Breast epithelium (tissue), 4 donors: ENCODE measurements at regions of chr20 and their contacts with region 1.

Region 1: GRCh38 chr20:10823585-10823984 is 149.8 kb upstream of the JAG1 start:
- DNase-seq: no peak
- H3K4me3 ChIP-seq: no peak overlapping the region
- H3K27ac ChIP-seq: no peak overlapping the region
- H3K4me1 ChIP-seq: no peaks in the 10 kb centered on the region
- H3K27me3 ChIP-seq: no peaks in the 10 kb centered on the region
- CTCF ChIP-seq: no peak
- POLR2A ChIP-seq: no peak

Region 2: DNA sequence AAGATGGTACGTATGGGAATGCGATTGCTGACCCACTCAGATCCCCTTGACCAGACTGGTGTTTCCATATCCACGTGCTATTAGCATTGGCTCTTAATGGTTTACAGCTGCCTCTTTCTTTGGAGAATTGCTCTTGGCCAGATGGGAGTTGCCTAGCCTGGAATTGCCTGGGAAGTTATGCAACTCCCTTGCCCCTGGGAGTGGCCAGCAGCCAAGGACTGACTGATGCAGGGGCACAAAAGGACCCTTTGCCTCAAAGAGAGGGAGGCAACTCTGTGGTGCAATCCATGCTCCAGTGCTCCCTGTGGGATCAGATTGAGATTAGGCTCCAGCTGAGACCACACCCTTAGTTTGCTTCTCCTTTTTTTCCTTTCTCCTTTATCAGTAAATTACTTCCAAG is 53.8 kb after region 1 on chr20:
- intact Hi-C with region 1: loop called (anchors 2 kb)
- DNase-seq: no peak
- H3K4me3 ChIP-seq: no peak overlapping the region
- H3K27ac ChIP-seq: no peak overlapping the region
- H3K4me1 ChIP-seq: no peaks in the 10 kb centered on the region
- H3K27me3 ChIP-seq: no peaks in the 10 kb centered on the region
- CTCF ChIP-seq: no peak
- POLR2A ChIP-seq: no peak